A673 (cell line): ENCODE measurements at regions of chr9 and their contacts with region 1.

Region 1: GRCh38 chr9:38727497-38728001 is 7.6 kb upstream of the FAM240B start:
- DNase-seq: peak; percentile 4
- H3K4me3 ChIP-seq: no peak overlapping the region
- H3K27ac ChIP-seq: no peak overlapping the region
- H3K4me1 ChIP-seq: no peaks in the 10 kb centered on the region
- H3K27me3 ChIP-seq: no peaks in the 10 kb centered on the region
- CTCF ChIP-seq: 0 out of 2 replicates have a peak, but pooled peaks have one; percentile 13

Region 2: DNA sequence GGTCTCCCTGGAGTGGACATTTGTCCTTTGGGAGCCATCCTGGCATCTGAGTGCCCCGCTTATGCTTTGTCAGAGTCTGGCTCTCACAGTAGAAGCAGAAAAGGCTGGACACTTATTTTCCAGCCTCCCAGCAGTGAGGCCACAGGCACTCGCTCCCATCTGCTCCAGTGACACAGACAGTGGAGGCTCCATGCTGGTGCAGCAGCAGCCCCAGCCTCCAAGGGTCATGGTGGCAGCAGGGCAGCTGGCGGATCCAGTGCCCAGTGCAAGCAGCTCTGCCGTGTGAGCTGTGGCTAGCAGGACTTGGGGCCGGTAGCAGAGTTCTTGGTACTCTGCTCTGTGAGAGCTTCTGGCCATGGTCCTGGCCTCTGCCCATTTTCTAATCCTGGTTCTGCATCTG is 492.3 kb before region 1 on chr9:
- CTCF ChIA-PET with region 1: no interaction called
- POLR2A ChIA-PET with region 1: no interaction called
- intact Hi-C with region 1: no loop called
- DNase-seq: no peak
- H3K4me3 ChIP-seq: no peak overlapping the region
- H3K27ac ChIP-seq: no peak overlapping the region
- H3K4me1 ChIP-seq: no peaks in the 10 kb centered on the region
- H3K27me3 ChIP-seq: no peaks in the 10 kb centered on the region
- CTCF ChIP-seq: no peak

Region 3: DNA sequence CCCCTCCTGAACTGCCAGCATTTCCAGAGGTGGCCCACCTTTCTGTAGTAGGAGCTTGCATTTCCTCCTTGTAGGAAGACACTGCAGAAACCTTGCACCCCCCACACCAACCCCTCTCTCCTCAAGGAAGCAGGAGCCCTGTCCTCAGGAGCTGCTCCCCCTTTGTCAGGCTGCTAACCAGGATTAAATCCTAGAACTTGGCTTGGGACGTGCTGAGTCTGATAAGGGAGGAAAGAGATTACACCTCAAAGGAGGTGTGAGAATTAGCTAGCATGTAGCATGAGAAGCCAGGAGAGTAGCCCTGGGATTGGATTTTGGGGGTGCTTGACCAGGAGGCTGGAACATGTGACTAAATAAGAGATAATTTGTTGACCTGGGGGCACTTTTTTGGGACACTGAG is 454.8 kb before region 1 on chr9:
- CTCF ChIA-PET with region 1: no interaction called
- POLR2A ChIA-PET with region 1: no interaction called
- intact Hi-C with region 1: no loop called
- DNase-seq: no peak
- H3K4me3 ChIP-seq: no peak overlapping the region
- H3K27ac ChIP-seq: no peak overlapping the region
- H3K4me1 ChIP-seq: no peaks in the 10 kb centered on the region
- H3K27me3 ChIP-seq: peaks cover 3% of the 10 kb centered on the region
- CTCF ChIP-seq: no peak

Region 4: DNA sequence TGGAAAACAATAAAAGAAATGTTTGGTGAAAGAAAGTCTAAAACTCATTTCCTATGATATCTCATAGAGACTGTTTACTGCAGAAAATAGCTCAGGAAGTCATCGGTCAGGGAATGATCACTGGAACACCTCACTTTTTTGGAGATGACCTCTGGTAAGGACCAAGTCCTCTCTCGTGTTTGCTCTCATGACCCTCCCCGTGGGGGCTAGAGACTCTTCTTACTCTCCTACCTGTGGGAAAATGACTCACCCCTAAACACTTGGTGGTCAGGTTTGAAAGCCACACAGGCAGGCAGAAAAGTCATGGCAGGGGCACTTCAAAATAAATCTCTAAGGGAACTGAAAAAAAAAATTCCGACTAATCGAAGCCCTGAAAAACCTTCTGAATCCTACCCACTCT is 55.8 kb before region 1 on chr9:
- CTCF ChIA-PET with region 1: no interaction called
- POLR2A ChIA-PET with region 1: no interaction called
- intact Hi-C with region 1: loop called (anchors 10 kb)
- DNase-seq: no peak
- H3K4me3 ChIP-seq: no peak overlapping the region
- H3K27ac ChIP-seq: no peak overlapping the region
- H3K4me1 ChIP-seq: peaks cover 14% of the 10 kb centered on the region
- H3K27me3 ChIP-seq: no peaks in the 10 kb centered on the region
- CTCF ChIP-seq: no peak

Region 5: DNA sequence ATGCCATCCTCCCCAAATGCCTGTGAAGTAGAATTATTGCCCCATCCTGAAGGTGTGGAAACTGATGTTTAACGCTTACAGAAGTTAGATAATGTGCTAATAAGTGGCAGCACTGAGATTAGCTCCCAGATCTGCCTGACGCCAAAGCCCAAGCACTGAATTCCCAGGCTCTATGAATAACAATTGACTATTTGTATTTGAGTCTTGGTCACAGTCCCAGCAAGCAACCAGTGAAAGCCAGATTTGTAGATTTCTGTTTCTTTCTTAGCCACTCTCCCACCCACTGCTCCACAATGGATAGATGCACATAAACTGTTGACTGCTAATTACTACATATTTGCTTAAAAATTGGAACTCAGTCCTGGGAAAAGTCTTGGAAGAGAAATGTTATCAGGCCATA is 42.0 kb before region 1 on chr9:
- CTCF ChIA-PET with region 1: no interaction called
- POLR2A ChIA-PET with region 1: no interaction called
- intact Hi-C with region 1: no loop called
- DNase-seq: no peak
- H3K4me3 ChIP-seq: no peak overlapping the region
- H3K27ac ChIP-seq: no peak overlapping the region
- H3K4me1 ChIP-seq: peaks cover 27% of the 10 kb centered on the region
- H3K27me3 ChIP-seq: no peaks in the 10 kb centered on the region
- CTCF ChIP-seq: no peak